Adrenal gland (tissue), 19 donors: ENCODE measurements at regions of chr6 and their contacts with region 1.

Region 1: DNA sequence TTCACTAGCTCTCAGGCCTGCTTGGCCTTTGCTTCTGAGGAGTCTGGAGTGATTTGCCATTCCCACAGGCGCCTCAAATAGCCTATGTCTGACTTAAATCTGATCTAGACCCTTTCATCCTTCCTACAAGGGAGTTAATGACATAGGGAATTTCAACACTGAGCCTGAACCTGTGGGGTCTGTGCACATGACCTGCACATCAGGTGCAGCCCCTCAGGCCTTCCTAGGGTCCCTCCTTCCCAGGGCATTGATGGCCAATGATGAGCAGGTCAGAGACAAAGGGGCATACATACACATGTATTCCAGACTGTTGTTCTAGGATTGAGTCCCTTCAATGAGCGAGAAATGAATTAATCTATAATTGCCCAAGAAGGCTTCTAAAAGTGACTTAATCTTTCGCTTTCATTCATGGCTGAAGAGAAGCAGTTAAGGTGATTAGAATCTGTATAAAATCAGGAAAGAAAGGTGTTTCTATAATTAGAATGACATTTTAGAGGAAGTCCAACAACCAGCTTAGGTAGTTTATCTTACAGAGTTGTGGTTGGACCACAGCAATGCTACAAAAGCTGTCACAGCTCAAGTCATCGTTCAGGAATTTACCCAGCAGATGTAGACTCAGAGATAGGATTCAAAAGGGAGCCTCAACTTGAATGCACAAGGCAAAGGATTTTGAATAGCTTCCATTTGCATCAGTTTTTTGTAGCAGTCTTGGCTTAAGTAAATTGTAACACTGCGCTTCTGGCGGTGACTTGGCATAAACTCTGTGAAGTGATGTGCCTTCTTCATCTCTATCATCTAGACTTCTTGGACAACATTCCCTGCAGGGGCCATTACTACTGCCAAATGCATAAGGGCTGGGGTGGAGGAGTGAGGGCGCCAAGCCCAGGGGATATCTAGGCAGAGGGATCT is 27.0 kb upstream of the TBC1D7 start:
- DNase-seq: no peak
- H3K4me3 ChIP-seq: no peak overlapping the region
- H3K27ac ChIP-seq: peak overlapping the region in 1 of 5 donors; percentile 31
- H3K4me1 ChIP-seq: no peaks in the 10 kb centered on the region
- H3K27me3 ChIP-seq: no peaks in the 10 kb centered on the region
- CTCF ChIP-seq: no peak
- POLR2A ChIP-seq: no peak

Region 2: GRCh38 chr6:13470238-13471140 is 115.2 kb after region 1 on chr6:
- intact Hi-C with region 1: loop called in 1 of 2 experiments (anchors 10 kb)
- DNase-seq: no peak
- H3K4me3 ChIP-seq: no peak overlapping the region
- H3K27ac ChIP-seq: peak overlapping the region in 1 of 5 donors; percentile 22
- H3K4me1 ChIP-seq: peaks cover 0 to 4% of the 10 kb centered on the region in 2 donors
- H3K27me3 ChIP-seq: no peaks in the 10 kb centered on the region
- CTCF ChIP-seq: no peak
- POLR2A ChIP-seq: no peak